Gastrocnemius medialis (tissue), 4 donors: ENCODE measurements at regions of chr19 and their contacts with region 1.

Region 1: DNA sequence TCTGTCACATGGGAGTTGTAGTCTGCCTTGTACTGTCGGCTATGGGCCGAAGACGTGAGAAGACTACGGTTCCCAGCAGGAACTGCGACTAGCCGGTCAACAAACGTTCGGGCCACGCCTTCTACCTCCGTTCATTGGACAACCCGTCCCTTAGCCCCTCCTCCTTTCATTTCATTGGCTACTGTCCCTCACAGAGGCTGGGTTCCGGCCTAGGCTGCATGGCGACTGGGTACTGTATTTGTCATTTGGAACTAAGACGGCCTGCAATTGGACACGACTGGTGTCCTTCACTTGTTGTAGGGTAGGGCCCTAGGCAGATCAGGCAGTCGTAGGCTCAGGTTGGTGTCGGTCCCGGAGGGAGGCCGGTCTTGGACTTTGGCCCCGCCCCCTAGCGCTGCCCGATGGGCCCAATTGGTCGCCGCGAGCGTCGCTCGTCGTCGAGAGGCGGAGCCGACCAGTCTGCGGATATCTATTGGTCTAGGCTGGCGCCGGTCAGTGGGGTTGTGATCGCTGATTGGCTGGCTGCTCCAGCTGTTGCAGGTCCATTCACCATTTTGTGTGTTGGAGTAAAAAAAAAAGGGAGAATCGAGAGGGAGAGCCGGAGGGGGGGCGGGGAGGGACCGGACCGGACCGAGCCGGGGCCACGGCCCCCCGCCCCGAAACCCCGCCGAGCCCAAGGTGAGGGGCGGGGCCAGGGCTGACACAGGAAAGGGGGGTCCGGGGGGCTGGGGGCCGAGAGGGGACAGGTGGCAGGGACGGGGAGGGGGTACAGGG is at the start of gene CIC:
- DNase-seq: peak; percentile 100
- ATAC-seq: peak; percentile 84 to 91
- H3K4me3 ChIP-seq: peak within 1 kb of the TSS; percentile 68 to 79 (median 74)
- H3K27ac ChIP-seq: peak within 1 kb of the TSS; percentile 95 to 98 (median 97)
- H3K4me1 ChIP-seq: peaks cover 30% of the 10 kb centered on the region in 2 donors
- H3K27me3 ChIP-seq: no peaks in the 10 kb centered on the region
- CTCF ChIP-seq: no peak
- POLR2A ChIP-seq: peak in 1 of 2 donors; percentile 18
- total RNA-seq, gene CIC: 15.2 to 52.2 (median 41.5) TPM

Region 2: DNA sequence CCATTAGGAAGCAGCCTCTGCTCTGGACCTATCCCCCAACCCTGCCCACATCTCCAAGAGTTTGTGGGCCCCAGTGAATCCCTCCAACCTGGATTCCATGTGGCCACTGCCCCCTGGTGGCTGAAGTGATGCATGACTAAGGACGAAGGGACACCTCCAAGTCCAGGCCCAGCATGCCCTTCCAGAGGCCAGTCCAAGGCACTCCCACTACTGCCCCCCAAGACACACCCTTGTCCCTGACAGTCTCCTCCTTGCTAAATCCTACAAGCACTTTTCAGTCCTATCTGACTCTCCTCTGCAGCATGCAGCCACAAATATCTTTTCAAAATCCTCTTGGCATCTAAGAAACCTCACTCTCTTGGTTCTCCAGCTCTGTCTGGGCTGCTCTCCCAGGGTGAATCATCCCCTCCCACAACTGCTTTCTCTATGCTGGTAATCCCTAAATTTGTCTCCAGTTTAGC is 84.5 kb before region 1 on chr19:
- in situ Hi-C with region 1: no loop called
- intact Hi-C with region 1: no loop called
- DNase-seq: peak; percentile 16 to 53
- ATAC-seq: peak in 1 of 2 donors; percentile 33
- H3K4me3 ChIP-seq: no peak overlapping the region
- H3K27ac ChIP-seq: no peak overlapping the region
- H3K4me1 ChIP-seq: no peaks in the 10 kb centered on the region
- H3K27me3 ChIP-seq: peaks cover 19 to 26% (median 23%) of the 10 kb centered on the region in 3 donors
- CTCF ChIP-seq: peak; percentile 55 to 81 (median 73)
- POLR2A ChIP-seq: no peak

Region 3: DNA sequence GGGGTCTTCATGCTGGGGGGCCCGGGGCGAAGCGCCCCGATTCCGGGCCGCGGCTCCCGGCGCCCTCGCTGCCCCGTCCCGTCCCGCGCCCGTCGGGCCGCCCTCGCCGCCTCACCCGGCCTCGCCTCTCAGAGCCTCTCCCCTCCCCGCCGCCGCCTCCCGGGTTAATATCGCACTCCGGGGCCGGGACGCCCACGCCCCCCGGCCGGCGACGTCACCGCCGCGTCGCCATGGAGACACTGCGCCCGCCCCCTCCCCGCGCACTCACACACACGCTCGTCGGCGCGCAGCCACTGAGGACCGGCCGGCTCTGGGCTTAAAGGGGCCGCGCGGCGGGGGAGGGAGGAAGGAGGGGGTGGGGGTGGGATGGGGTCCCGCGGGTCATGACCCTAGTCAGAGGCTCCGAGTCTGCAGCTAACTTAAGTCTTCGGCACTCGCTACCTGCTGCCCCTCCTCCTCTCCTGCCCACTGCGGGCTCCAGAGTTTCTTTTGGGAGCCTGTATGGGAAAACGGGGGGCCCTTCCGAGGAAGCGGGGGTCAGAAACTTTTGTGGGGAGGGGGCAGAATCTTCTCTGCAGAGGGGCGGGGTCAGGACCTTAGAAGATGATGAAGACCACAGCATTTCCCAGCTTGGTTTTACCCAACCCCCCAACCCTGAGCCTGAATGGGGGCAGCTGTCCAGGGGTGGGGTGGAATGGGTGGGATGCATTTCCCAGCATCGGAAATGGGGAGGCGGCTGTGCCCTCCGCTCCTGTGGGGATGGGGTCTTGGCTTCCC is 13.7 kb before region 1 on chr19 and contains the start of gene ERF:
- in situ Hi-C with region 1: no loop called
- intact Hi-C with region 1: loop called (anchors 1 kb)
- DNase-seq: peak; percentile 68 to 80
- ATAC-seq: peak; percentile 40 to 54
- H3K4me3 ChIP-seq: peak within 1 kb of the TSS; percentile 60 to 90 (median 76)
- H3K27ac ChIP-seq: peak within 1 kb of the TSS; percentile 91 to 94 (median 92)
- H3K4me1 ChIP-seq: peaks cover 28 to 30% of the 10 kb centered on the region in 2 donors
- H3K27me3 ChIP-seq: peaks cover 24 to 40% (median 37%) of the 10 kb centered on the region in 3 donors
- CTCF ChIP-seq: peak in 1 of 5 experiments; percentile 24
- POLR2A ChIP-seq: peak; percentile 80 to 96
- total RNA-seq, gene ERF: 14.0 to 26.7 (median 14.8) TPM

Region 4: GRCh38 chr19:42283143-42284065 is 14.5 kb after region 1 on chr19:
- in situ Hi-C with region 1: no loop called
- intact Hi-C with region 1: loop called (anchors 1 kb)
- DNase-seq: peak; percentile 89 to 96
- ATAC-seq: peak; percentile 64 to 71
- H3K4me3 ChIP-seq: peak overlapping the region; percentile 43 to 60 (median 58)
- H3K27ac ChIP-seq: peak overlapping the region; percentile 95 to 97 (median 96)
- H3K4me1 ChIP-seq: peaks cover 58 to 64% of the 10 kb centered on the region in 2 donors
- H3K27me3 ChIP-seq: no peaks in the 10 kb centered on the region
- CTCF ChIP-seq: no peak
- POLR2A ChIP-seq: peak in 1 of 2 donors; percentile 68